ENCODE measurements at regions of chr3 and their contacts with region 1.

Region 1: GRCh38 chr3:48635222-48636021 is at the start of gene SLC26A6:
- DNase-seq: peak; percentile 79 to 96 (median 93)
- ATAC-seq: peak; percentile 98
- H3K4me3 ChIP-seq: peak within 1 kb of the TSS; percentile 78 to 93
- H3K4me3 Mint-ChIP-seq: peak within 1 kb of the TSS; percentile 87
- H3K27ac ChIP-seq: peak within 1 kb of the TSS; percentile 34 to 64
- H3K27ac Mint-ChIP-seq: no peak within 1 kb of the TSS
- H3K4me1 ChIP-seq: peaks cover 17% of the 10 kb centered on the region
- H3K4me1 Mint-ChIP-seq: peaks cover 17% of the 10 kb centered on the region
- H3K27me3 ChIP-seq: no peaks in the 10 kb centered on the region
- H3K27me3 Mint-ChIP-seq: no peaks in the 10 kb centered on the region
- CTCF ChIP-seq: no peak
- total RNA-seq, gene SLC26A6: 10.9 to 13.5 TPM

Region 2: DNA sequence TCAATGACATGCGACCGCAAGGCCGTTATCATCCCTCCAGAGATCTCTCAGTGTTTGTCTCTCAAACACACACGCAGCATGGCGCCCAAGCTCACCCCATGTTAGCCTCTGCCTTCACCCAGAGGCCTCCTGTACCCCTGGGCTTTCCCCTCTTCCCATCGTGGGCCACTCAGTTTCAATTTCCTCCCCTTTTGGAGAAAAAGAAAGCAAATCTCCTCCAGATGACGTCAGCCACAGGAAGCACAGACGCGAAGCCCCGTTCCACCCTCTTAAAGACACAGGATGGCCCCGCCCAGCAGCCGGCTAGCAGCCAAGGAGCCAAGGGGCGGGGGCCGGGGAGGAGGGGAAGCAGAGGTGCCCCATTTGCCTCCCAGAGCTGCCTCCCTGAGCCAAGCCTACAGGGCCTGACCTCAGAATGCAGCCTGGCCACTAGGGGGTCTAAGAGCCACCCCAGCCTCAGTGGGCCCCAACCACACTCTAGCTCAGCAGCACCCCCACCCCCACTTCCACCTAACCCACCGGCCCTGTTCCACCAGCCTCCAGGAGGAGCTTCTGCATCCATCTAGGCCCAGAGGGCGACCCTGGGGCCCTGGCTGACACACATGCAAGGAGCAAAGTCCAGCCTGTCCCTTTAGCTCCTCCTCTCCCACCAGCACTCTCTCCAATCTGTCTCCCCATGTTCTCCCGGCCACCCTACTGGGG is 162.4 kb before region 1 on chr3:
- CTCF ChIA-PET with region 1: no interaction called
- POLR2A ChIA-PET with region 1: no interaction called
- intact Hi-C with region 1: loop called in 1 of 2 experiments (anchors 5 kb)
- DNase-seq: peak; percentile 85 to 99 (median 92)
- ATAC-seq: peak; percentile 87
- H3K4me3 ChIP-seq: peak overlapping the region; percentile 62 to 65
- H3K4me3 Mint-ChIP-seq: peak overlapping the region; percentile 90
- H3K27ac ChIP-seq: peak overlapping the region; percentile 82 to 92
- H3K27ac Mint-ChIP-seq: peak overlapping the region; percentile 99
- H3K4me1 ChIP-seq: peaks cover 55% of the 10 kb centered on the region
- H3K4me1 Mint-ChIP-seq: peaks cover 56% of the 10 kb centered on the region
- H3K27me3 ChIP-seq: no peaks in the 10 kb centered on the region
- H3K27me3 Mint-ChIP-seq: no peaks in the 10 kb centered on the region
- CTCF ChIP-seq: no peak

Region 3: DNA sequence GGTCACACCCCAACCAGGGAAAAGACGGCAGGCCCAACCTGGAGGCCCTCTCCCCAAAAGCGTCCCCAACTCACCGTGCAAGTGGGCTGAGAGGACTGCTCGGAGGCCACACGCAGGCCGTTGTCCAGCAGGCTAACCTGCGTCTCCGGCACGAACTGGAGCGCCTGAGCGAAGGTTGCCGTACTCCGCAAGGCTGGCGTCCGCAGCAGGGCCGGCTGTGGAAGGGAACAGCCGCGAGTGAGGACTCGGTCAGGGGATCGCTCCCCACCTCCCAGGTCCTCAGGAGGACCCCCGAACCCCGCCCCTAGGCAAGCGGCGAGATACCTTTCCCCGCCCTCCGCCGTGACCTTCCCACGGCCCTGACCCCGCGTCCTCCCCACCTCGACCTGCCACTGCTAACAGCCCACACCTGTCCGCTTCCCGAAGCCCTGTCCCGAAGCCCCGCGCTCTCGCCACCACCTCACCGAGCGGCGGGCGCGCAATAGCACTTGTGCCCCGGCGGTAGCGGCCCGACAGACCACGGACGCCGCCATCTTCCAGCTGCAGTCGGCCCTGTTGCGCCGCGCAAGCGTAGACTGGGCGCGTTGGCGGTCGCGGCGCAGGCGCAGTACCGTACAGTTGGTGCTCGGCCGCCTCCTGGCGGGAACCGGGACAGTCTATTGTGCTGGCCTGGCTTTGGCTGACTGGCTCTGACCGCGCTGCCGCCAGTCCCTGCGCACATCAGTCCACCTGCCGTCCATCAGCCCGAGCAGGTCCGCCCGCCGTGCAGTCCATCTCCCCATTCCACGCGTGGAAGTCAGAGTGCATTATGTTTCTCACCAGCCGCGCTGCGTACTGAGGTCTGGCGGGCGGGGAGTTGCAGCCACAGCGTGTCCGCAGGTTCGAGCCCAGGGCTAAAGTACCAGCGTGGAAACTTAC is 26.1 kb before region 1 on chr3 and contains the start of gene UQCRC1:
- CTCF ChIA-PET with region 1: no interaction called
- POLR2A ChIA-PET with region 1: no interaction called
- intact Hi-C with region 1: loop called (anchors 1 kb)
- DNase-seq: peak; percentile 82 to 96 (median 90)
- ATAC-seq: peak; percentile 99
- H3K4me3 ChIP-seq: peak within 1 kb of the TSS; percentile 78 to 99
- H3K4me3 Mint-ChIP-seq: peak within 1 kb of the TSS; percentile 99
- H3K27ac ChIP-seq: peak within 1 kb of the TSS; percentile 68 to 87
- H3K27ac Mint-ChIP-seq: peak within 1 kb of the TSS; percentile 98
- H3K4me1 ChIP-seq: peaks cover 15% of the 10 kb centered on the region
- H3K4me1 Mint-ChIP-seq: peaks cover 16% of the 10 kb centered on the region
- H3K27me3 ChIP-seq: no peaks in the 10 kb centered on the region
- H3K27me3 Mint-ChIP-seq: no peaks in the 10 kb centered on the region
- CTCF ChIP-seq: peak; percentile 78
- total RNA-seq, gene UQCRC1: 84.2 to 92.5 TPM

Region 4: GRCh38 chr3:48623851-48624547 is 11.4 kb before region 1 on chr3:
- CTCF ChIA-PET with region 1: interaction called, 12 read pairs
- POLR2A ChIA-PET with region 1: interaction called, 4 read pairs
- intact Hi-C with region 1: no loop called
- DNase-seq: no peak
- ATAC-seq: no peak
- H3K4me3 ChIP-seq: no peak overlapping the region
- H3K4me3 Mint-ChIP-seq: no peak overlapping the region
- H3K27ac ChIP-seq: no peak overlapping the region
- H3K27ac Mint-ChIP-seq: no peak overlapping the region
- H3K4me1 ChIP-seq: no peaks in the 10 kb centered on the region
- H3K4me1 Mint-ChIP-seq: peaks cover 10% of the 10 kb centered on the region
- H3K27me3 ChIP-seq: no peaks in the 10 kb centered on the region
- H3K27me3 Mint-ChIP-seq: no peaks in the 10 kb centered on the region
- CTCF ChIP-seq: no peak

Region 5: GRCh38 chr3:48656061-48656840 is 20.8 kb after region 1 on chr3:
- CTCF ChIA-PET with region 1: interaction called, 4 read pairs
- POLR2A ChIA-PET with region 1: interaction called, 9 read pairs
- intact Hi-C with region 1: loop called (anchors 1 kb)
- DNase-seq: peak; percentile 71 to 94 (median 83)
- ATAC-seq: peak; percentile 81
- H3K4me3 ChIP-seq: peak overlapping the region; percentile 53 to 83
- H3K4me3 Mint-ChIP-seq: peak overlapping the region; percentile 83
- H3K27ac ChIP-seq: peak overlapping the region; percentile 65 to 68
- H3K27ac Mint-ChIP-seq: peak overlapping the region; percentile 90
- H3K4me1 ChIP-seq: peaks cover 18% of the 10 kb centered on the region
- H3K4me1 Mint-ChIP-seq: peaks cover 18% of the 10 kb centered on the region
- H3K27me3 ChIP-seq: peaks cover 0 to 4% of the 10 kb centered on the region in 2 experiments
- H3K27me3 Mint-ChIP-seq: peaks cover 11% of the 10 kb centered on the region
- CTCF ChIP-seq: peak; percentile 60

Region 6: DNA sequence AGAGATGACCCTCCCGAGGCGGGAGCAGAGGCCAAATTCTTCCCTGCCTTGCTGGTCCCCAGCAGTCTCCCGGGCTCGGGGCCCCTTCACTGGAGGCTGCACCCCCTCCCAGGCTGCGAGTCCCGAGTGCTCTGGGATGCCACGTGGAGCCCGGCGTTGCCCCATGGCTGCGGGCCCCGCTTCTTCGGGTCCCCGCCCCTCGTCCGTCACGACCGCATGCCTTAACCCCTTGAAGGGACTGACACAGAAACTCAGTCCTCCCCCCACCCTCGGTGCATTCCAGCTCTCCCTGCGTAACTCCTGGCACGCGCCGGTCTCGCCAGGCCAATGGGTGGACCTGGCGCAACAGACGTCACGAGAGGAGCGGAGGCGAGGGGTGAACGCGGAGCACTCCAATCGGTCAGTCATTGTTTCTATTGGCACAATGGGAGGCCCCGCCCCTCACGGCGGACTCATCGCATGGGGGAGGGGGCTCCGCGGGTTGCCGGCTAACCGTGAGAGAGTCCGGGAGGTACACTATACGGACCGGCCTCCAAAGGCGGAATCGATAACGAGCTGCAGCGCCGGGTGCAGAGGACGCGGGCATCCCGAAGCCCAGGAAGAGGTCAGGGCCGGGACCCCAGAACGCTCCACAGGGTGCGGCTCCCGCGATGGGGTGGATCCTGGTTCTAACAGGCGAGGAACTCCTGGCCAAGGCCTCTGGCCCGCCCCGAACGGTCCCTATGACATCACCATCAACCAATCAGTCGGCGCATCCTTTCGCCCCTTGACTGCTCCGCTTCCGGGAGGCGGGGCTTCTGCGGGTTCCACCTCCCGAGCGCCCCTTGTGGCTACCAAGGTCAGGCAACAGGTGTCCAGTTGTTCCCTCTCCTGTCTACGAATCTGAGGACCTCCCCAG is 28.2 kb after region 1 on chr3:
- CTCF ChIA-PET with region 1: no interaction called
- POLR2A ChIA-PET with region 1: no interaction called
- intact Hi-C with region 1: loop called in 1 of 2 experiments (anchors 1 kb)
- DNase-seq: peak; percentile 70 to 93 (median 79)
- ATAC-seq: peak; percentile 78
- H3K4me3 ChIP-seq: peak overlapping the region; percentile 61 to 65
- H3K4me3 Mint-ChIP-seq: peak overlapping the region; percentile 75
- H3K27ac ChIP-seq: peak overlapping the region in 1 of 2 experiments; percentile 30
- H3K27ac Mint-ChIP-seq: no peak overlapping the region
- H3K4me1 ChIP-seq: peaks cover 30% of the 10 kb centered on the region
- H3K4me1 Mint-ChIP-seq: peaks cover 9% of the 10 kb centered on the region
- H3K27me3 ChIP-seq: peaks cover 14 to 21% of the 10 kb centered on the region in 2 experiments
- H3K27me3 Mint-ChIP-seq: peaks cover 23% of the 10 kb centered on the region
- CTCF ChIP-seq: peak; percentile 56

Measured in CD8-positive, alpha-beta T cell (primary cell).